BJ (cell line): ENCODE measurements at regions of chr12 and their contacts with region 1.

Region 1: DNA sequence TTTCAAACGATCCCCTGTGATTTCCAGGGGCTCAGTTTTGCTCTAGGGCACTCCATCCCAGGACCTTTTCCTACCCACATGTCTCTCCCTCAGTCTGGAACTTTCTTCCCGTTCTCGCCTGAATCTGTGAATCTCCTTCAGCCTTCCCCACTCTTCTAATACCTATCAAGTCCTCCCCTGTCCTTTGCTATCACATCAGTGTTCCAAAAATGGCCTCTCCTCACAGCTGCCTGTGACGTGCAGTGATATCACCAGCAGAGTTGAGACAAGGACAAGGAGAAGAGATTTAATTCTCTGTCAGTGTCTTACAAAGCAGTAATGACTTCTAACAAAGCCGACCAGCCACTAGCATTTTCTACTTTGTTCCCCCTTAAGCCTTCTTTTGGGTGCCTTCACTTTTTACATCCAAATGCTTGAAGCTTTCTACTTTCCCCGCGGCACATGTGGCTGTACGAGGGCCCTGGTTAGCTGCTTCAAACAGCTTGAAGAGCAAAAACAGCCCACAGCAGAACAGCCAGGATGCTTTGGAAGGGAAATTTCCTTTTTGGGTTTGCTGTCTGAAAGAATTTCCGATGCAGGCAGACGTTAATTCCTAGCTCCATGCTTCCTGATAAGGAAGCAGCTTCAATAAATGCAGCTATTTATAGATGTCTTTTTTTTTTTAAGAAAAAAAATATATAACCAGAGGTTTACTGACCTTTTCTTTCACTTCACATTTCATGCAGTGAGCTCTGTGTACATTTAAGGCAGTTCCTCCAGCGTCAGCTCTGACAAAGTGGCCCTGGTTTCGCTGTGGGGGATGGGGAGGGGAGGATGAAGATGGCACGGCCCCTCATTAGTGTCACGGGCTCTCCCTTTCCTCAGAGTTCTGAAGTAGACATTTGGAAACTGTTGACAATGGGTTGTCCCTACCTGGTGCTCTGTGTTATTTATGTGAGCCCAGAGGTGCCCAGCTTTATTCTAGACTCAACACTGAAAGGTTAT is 109.3 kb downstream of the ETV6 start:
- DNase-seq: no peak
- H3K4me3 ChIP-seq: no peak overlapping the region
- H3K27me3 ChIP-seq: no peaks in the 10 kb centered on the region
- CTCF ChIP-seq: no peak

Region 2: GRCh38 chr12:11746940-11747716 is 11.7 kb before region 1 on chr12:
- CTCF ChIA-PET with region 1: interaction called, 15 read pairs
- POLR2A ChIA-PET with region 1: interaction called, 3 read pairs
- DNase-seq: no peak
- H3K4me3 ChIP-seq: no peak overlapping the region
- H3K27me3 ChIP-seq: no peaks in the 10 kb centered on the region
- CTCF ChIP-seq: no peak